ENCODE measurements at regions of chr2 and their contacts with region 1.

Region 1: DNA sequence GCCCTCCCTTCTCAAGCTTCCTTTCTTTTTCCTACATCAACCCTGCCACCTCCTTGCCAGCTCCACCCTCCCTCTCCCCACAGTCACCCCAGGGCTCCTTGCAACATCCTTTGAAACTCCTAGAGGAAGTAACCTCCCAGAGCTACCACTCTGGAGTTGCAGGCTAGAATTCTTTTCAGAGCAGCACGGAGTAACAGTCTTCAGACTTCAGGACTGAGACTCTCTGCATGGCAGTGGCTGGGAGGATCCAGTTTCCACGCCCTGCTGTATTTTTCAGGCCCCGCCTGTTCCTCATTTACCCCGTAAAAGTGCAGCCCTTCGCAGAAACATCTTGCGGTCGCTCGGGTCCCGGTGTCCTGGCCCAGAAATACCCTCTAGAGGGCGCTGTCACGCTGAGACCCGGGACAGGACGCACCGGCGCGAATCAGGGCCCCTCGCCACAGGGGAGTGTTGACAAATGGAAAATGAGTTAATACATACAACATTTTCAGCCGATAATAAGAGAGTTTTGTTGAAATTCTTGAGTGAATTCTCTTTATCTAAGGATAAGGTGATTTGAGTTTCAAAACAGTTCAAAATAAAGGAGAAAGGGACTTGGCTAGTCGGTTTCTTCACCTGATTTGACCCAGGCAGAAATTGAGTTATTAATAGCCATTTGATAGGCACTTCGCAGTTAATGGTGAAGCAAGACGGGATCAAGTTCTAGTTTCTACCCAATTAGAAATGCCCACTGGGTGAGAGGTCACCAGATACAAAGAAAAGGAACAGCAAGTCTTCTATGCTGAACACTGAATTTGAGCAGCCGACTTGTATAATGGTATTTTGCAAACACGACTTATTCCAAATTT is 18.5 kb upstream of the NTSR2 start:
- DNase-seq: peak; percentile 62 to 86 (median 81)
- ATAC-seq: peak; percentile 85
- H3K4me3 ChIP-seq: no peak overlapping the region
- H3K4me3 Mint-ChIP-seq: peak overlapping the region; percentile 58
- H3K27ac ChIP-seq: no peak overlapping the region
- H3K27ac Mint-ChIP-seq: no peak overlapping the region
- H3K4me1 ChIP-seq: peaks cover 4% of the 10 kb centered on the region
- H3K4me1 Mint-ChIP-seq: peaks cover 11% of the 10 kb centered on the region
- H3K27me3 ChIP-seq: peaks cover 0 to 4% of the 10 kb centered on the region in 2 experiments
- H3K27me3 Mint-ChIP-seq: peaks cover 8% of the 10 kb centered on the region
- CTCF ChIP-seq: peak; percentile 96

Region 2: DNA sequence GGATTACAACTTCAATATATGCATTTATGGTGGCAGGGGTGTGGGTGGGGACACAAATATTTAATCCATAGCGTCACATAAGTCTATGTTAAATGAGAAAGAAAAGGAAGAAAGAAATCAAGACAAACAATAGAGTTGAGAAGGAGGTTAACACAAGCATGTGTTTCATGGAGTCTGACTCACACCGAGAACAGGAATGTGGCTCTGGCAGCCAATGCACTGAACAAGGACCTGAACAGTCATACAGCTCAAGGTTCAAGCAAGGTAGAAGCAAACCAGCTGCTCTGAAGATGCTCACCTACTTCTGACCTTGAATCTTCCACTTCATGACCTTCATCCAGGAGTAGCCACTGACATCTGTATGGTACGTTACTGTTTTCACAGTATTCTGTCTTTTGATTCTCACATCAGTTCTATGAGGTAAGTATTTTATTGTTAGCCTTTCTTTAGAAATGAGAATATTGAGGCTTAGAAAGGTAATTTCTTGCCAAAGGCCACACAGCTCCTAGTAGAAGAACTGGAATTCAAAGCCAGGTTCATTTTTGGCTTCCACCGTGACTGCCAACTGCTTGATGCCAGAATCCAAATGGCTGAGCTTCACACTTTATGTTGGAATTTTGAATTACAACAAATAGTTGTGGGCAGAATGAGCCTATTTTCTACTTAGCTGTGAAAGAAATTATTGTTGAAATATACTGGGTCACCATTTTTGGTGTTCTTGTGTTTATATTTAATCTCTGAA is 22.0 kb after region 1 on chr2:
- CTCF ChIA-PET with region 1: interaction called, 25 read pairs
- POLR2A ChIA-PET with region 1: no interaction called
- intact Hi-C with region 1: no loop called
- DNase-seq: no peak
- ATAC-seq: no peak
- H3K4me3 ChIP-seq: no peak overlapping the region
- H3K4me3 Mint-ChIP-seq: no peak overlapping the region
- H3K27ac ChIP-seq: no peak overlapping the region
- H3K27ac Mint-ChIP-seq: no peak overlapping the region
- H3K4me1 ChIP-seq: no peaks in the 10 kb centered on the region
- H3K4me1 Mint-ChIP-seq: no peaks in the 10 kb centered on the region
- H3K27me3 ChIP-seq: no peaks in the 10 kb centered on the region
- H3K27me3 Mint-ChIP-seq: no peaks in the 10 kb centered on the region
- CTCF ChIP-seq: no peak

Region 3: GRCh38 chr2:11743846-11744553 is 55.6 kb after region 1 on chr2:
- CTCF ChIA-PET with region 1: interaction called, 10 read pairs
- POLR2A ChIA-PET with region 1: interaction called, 3 read pairs
- intact Hi-C with region 1: loop called (anchors 1 to 2 kb)
- DNase-seq: peak in 8 of 9 experiments; percentile 48 to 86 (median 68)
- ATAC-seq: peak; percentile 25
- H3K4me3 ChIP-seq: peak overlapping the region in 1 of 2 experiments; percentile 9
- H3K4me3 Mint-ChIP-seq: peak overlapping the region; percentile 54
- H3K27ac ChIP-seq: peak overlapping the region in 1 of 2 experiments; percentile 20
- H3K27ac Mint-ChIP-seq: peak overlapping the region; percentile 56
- H3K4me1 ChIP-seq: peaks cover 41% of the 10 kb centered on the region
- H3K4me1 Mint-ChIP-seq: peaks cover 46% of the 10 kb centered on the region
- H3K27me3 ChIP-seq: no peaks in the 10 kb centered on the region
- H3K27me3 Mint-ChIP-seq: no peaks in the 10 kb centered on the region
- CTCF ChIP-seq: no peak

Region 4: DNA sequence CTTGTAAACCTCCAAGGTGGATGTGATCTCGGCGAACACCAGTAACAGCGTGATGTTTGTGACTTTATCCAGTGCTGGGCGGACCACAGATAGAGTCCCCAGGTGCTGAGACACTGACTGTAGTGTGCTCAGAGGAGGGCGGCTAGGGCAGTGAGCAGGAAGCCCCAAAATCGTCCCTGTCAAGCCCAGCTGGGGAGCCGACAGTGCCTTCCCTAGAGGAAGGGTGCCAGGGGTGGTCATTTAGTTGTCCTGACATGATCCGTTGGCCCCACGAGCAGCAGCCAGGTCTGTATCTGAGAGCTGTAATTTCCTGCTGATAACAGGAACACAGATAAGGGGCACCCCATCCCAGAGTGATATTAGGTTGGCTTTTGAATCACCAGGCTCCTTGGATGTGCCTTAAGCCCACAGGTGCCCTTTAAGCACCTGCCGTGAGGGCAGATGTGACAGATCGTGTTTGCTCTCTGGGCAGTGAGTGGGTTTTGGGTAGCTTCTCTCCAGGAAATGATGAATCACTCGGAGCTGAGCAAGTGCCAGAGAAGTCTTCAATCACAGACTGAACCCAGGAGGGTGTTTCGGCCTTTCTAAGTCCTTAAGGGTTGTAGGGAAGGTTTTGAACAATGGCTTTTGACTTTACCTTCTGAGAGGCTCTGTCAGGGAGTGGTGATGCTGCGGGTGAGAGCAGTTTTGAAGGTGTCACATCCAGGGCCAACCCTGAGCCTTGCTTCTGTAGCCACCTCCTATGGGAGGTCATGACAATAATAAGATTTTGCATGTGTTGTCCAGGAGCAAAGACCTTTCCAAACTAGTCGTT is 65.6 kb after region 1 on chr2:
- CTCF ChIA-PET with region 1: interaction called, 14 read pairs
- POLR2A ChIA-PET with region 1: no interaction called
- intact Hi-C with region 1: no loop called
- DNase-seq: peak in 8 of 9 experiments; percentile 41 to 78 (median 72)
- ATAC-seq: peak; percentile 43
- H3K4me3 ChIP-seq: peak overlapping the region; percentile 31 to 40
- H3K4me3 Mint-ChIP-seq: peak overlapping the region; percentile 84
- H3K27ac ChIP-seq: peak overlapping the region; percentile 36 to 91
- H3K27ac Mint-ChIP-seq: peak overlapping the region; percentile 96
- H3K4me1 ChIP-seq: peaks cover 67% of the 10 kb centered on the region
- H3K4me1 Mint-ChIP-seq: peaks cover 81% of the 10 kb centered on the region
- H3K27me3 ChIP-seq: no peaks in the 10 kb centered on the region
- H3K27me3 Mint-ChIP-seq: no peaks in the 10 kb centered on the region
- CTCF ChIP-seq: no peak

Measured in CD8-positive, alpha-beta T cell (primary cell).